Activated CD4-positive, alpha-beta T cell treated with anti-CD3 and anti-CD28 coated beads for 36 hours (primary cell): ENCODE measurements at regions of chr11 and their contacts with region 1.

Region 1: DNA sequence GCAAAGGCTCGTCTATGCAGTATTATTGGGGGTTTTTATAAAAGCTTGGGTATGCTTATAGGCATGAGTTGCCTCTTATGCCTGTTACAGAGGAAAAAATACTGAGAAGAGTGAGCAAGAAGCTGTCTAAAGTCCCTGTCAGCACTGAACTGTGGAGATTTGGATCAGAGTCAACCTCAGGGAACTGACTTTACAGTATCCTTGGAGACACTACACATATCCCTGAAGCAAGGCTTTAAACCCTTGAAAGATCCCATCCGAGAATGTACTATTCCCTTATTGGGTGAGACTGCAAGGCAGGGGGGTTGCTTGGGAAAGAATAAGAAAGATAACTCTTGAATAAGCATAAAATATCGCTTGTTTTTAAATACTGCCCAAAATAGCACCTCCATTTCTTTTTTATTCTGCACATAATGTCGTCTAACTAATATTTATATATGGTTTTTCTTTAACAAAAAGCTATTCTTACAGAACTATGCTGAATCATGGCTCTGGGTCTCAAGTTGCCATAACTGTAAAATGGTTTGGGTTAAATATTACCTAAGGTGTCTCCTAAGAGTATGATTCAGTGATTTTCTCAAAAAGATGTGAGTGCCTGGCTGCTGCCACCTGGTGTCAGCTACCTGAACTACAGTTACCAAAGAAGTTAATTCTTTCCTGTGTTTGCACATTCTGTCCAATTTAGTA is 1062.8 kb downstream of the DLG2 start:
- DNase-seq: peak; percentile 54
- ATAC-seq: no peak
- H3K4me3 Mint-ChIP-seq: no peak overlapping the region
- H3K27ac Mint-ChIP-seq: no peak overlapping the region
- H3K4me1 Mint-ChIP-seq: no peaks in the 10 kb centered on the region
- H3K27me3 Mint-ChIP-seq: no peaks in the 10 kb centered on the region

Region 2: GRCh38 chr11:83827940-83828554 is 736.3 kb before region 1 on chr11:
- CTCF ChIA-PET with region 1: interaction called, 4 read pairs
- POLR2A ChIA-PET with region 1: no interaction called
- intact Hi-C with region 1: loop called in 1 of 2 experiments (anchors 1 kb)
- DNase-seq: no peak
- ATAC-seq: peak; percentile 51
- H3K4me3 Mint-ChIP-seq: no peak overlapping the region
- H3K27ac Mint-ChIP-seq: no peak overlapping the region
- H3K4me1 Mint-ChIP-seq: no peaks in the 10 kb centered on the region
- H3K27me3 Mint-ChIP-seq: peaks cover 8% of the 10 kb centered on the region

Region 3: GRCh38 chr11:83836883-83837654 is 727.3 kb before region 1 on chr11:
- CTCF ChIA-PET with region 1: interaction called, 5 read pairs
- POLR2A ChIA-PET with region 1: no interaction called
- intact Hi-C with region 1: loop called in 1 of 2 experiments (anchors 2 kb)
- DNase-seq: peak; percentile 36
- ATAC-seq: peak; percentile 64
- H3K4me3 Mint-ChIP-seq: no peak overlapping the region
- H3K27ac Mint-ChIP-seq: no peak overlapping the region
- H3K4me1 Mint-ChIP-seq: no peaks in the 10 kb centered on the region
- H3K27me3 Mint-ChIP-seq: peaks cover 7% of the 10 kb centered on the region

Region 4: GRCh38 chr11:84800755-84801346 is 236.5 kb after region 1 on chr11:
- CTCF ChIA-PET with region 1: no interaction called
- POLR2A ChIA-PET with region 1: no interaction called
- intact Hi-C with region 1: no loop called
- DNase-seq: no peak
- ATAC-seq: no peak
- H3K4me3 Mint-ChIP-seq: no peak overlapping the region
- H3K27ac Mint-ChIP-seq: no peak overlapping the region
- H3K4me1 Mint-ChIP-seq: no peaks in the 10 kb centered on the region
- H3K27me3 Mint-ChIP-seq: no peaks in the 10 kb centered on the region